Posterior vena cava (tissue), 2 donors: ENCODE measurements at regions of chr2 and their contacts with region 1.

Region 1: DNA sequence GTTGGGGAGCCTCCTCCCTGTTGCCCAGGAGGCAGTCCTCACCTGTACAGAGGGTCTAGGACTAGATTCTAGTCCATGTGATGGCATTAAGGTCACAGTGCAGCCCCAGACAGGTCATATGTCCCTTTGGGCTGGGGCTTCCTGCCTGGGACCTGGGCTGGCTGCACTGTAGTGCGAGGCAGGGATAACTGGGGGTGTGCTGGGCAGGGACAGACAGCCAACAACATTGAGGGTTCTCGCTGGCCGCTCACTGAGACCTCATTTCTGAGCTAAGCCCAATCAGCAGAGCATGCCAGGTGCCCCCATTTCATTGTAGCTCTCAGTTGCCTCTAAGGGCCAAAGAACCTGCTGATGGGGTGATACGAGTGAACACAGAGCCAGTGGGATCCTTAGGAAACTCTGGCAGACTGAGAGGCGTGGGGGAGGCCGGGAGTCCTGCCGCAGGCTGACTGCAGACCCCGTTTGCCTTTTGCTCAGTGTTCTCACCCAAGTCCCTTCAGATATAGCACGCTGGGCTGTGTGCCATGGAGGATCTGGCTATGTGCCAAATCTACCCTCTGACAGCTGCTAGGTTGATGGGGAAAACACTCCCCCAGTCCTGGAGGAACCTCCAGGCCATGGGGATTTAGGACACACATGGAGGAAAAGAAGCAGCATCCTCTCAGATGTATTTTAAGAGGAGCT is 51.9 kb downstream of the DYSF start:
- DNase-seq: peak; percentile 42

Region 2: GRCh38 chr2:71299507-71299906 is 205.7 kb before region 1 on chr2:
- intact Hi-C with region 1: loop called (anchors 5 kb)
- DNase-seq: no peak

Region 3: DNA sequence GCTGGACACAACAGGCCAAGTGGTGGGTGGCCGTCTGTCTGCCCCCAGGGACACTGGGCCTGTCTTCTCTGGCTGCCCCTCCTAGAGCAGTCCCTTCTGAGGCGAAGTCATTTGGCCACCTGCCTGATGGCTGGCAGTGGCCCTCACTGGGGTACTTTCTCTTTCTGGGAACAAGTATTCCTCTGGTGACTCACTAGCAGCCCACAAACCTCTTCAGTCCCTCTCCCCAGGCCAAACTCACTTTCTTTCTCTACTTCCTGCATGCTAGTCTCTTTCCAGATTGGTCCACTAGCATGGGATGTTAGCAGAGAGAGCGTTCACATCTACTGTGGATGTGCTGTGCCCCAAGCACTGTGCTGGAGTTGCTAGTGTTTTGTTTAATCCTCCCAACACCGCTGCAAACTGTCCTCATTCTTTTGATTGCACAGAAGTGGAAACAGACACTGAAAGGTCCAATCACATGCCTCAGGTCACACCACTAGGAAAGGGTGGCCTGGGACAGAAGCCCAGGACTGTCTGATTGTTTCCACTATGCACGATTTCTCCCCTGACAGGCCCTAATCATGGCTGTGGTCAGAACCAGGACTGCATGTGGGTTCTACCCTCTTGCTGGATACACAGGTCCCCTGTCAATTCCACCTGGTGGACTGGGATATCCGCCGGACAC is 46.7 kb before region 1 on chr2:
- intact Hi-C with region 1: loop called (anchors 2 to 5 kb)
- DNase-seq: no peak

Region 4: DNA sequence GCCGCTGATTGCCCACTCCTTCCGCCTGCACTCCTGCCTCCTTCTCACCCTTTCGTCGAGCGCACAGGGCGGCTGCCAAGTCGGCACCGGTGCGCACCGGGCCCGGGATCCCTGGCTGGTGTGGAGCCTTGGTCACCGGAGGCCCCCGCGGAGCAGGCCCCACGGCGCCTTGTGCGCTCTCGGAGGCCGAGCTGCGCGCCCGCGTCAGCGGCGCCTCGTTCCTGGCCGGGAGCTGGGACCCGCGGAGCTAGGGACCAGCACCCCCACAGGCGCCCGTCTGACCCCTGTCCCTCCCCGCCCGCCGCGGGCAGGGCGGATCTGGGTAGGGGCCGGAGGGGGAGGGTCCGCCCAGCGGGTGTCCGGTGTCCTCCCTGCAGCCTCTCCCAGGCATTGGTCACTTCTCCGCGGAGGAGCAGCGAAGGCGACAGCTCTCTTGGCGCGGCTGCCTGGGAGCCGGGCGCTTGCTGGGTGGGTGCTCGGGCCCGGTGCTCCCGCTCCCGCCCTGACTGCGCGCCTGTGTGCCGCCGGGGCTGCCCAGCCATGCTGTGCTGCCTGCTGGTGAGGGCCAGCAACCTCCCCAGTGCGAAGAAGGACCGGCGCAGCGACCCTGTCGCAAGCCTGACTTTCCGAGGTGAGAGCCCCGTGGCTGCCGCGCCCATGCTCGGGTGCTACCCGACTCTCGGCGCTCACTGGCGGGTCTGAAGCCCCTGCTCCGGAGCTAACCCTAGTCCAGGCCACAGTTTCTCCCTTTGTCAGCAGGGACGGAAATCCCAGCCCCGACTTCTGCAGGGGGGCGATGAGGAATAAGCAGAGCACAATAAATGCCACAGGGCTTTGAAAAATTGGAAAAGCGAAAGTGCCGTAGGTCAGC is 38.7 kb before region 1 on chr2:
- intact Hi-C with region 1: loop called (anchors 2 to 5 kb)
- DNase-seq: no peak

Region 5: GRCh38 chr2:71749671-71750101 is 244.5 kb after region 1 on chr2:
- intact Hi-C with region 1: no loop called
- DNase-seq: no peak